ENCODE measurements at regions of chr2 and their contacts with region 1.

Region 1: DNA sequence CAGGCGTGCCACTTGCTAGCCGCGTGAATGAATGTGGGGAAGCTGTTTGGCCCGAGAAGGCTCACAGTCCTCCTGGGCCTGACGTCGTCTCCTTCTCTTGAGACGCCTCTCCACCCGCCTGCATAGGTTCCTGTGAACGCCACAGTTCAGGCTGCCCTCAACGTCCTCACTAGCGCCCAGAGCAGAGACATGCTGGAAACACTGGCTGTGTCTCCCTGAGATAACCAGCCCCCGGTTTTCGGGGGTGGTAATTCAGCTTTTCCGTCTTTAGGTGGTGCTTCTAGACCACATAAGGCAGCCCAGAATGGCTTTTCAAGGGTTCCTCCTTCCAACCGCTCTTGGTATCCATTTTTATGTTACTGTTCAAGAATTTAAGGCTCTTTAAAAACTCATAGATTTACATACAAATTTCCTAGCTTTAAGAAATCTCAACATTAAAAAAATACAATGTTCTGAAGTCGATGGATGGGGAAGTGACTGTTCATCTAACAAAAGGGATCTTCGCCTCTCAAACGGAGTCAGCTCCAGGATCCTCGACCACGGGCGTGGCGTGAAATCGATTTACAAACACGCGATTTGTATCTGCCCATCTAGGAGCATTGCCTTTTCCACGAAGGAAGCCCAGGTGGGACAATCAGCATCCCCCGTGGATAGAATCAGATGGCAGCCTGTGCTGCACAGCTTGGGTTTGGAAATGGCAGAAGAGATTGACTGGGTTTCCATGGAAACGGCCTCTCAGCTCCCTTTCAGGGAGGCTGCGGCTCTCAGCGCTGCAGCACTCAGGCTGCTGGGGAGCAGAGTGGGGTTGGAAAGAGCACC is 110.6 kb upstream of the PXDN start:
- DNase-seq: peak; percentile 95
- H3K4me3 ChIP-seq: peak overlapping the region; percentile 46 to 47
- H3K27ac ChIP-seq: peak overlapping the region in 1 of 2 experiments; percentile 55; a peak in 2 of 4 replicates
- H3K4me1 ChIP-seq: peaks cover 3 to 16% of the 10 kb centered on the region in 2 experiments; a peak in 3 of 4 replicates
- H3K27me3 ChIP-seq: peaks cover 30% of the 10 kb centered on the region
- CTCF ChIP-seq: peak; percentile 67
- EP300 ChIP-seq: no peak
- RAD21 ChIP-seq: peak; percentile 95

Region 2: GRCh38 chr2:1868683-1869141 is 13.8 kb after region 1 on chr2:
- CTCF ChIA-PET with region 1: interaction called, 52 read pairs
- POLR2A ChIA-PET with region 1: no interaction called
- DNase-seq: peak; percentile 85
- H3K4me3 ChIP-seq: no peak overlapping the region
- H3K27ac ChIP-seq: peak overlapping the region in 1 of 2 experiments; percentile 62; a peak in 2 of 4 replicates
- H3K4me1 ChIP-seq: peaks cover 0 to 58% of the 10 kb centered on the region in 2 experiments; a peak in 3 of 4 replicates
- H3K27me3 ChIP-seq: peaks cover 12% of the 10 kb centered on the region
- CTCF ChIP-seq: no peak
- EP300 ChIP-seq: peak in 1 of 2 experiments; percentile 33; a peak in 1 of 4 replicates
- RAD21 ChIP-seq: 0 out of 2 replicates have a peak, but pooled peaks have one; percentile 2

Region 3: DNA sequence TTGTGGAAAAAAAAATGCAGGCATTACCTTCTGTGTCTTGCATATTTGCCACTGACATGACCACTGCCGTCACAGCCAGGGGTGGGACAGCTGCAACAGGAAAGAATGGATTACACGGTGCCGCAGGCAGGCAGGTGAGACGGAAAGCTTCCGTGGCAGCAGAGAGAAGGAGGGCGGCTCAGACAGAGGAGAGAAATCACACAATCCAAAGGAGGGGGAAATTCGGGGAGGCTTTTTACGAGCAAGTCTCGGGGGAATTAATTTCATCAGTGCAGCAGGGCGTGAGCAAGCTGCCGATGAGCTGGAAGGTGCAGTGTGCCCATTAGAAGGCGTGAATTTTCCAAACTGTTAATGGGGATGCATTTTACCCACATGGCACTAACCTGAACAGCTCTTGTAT is 124.2 kb after region 1 on chr2:
- CTCF ChIA-PET with region 1: no interaction called
- POLR2A ChIA-PET with region 1: no interaction called
- DNase-seq: no peak
- H3K4me3 ChIP-seq: no peak overlapping the region
- H3K27ac ChIP-seq: peak overlapping the region in 1 of 2 experiments; percentile 43; a peak in 1 of 4 replicates
- H3K4me1 ChIP-seq: peaks cover 3 to 25% of the 10 kb centered on the region in 2 experiments; a peak in 3 of 4 replicates
- H3K27me3 ChIP-seq: no peaks in the 10 kb centered on the region
- CTCF ChIP-seq: no peak
- EP300 ChIP-seq: no peak
- RAD21 ChIP-seq: no peak

Region 4: DNA sequence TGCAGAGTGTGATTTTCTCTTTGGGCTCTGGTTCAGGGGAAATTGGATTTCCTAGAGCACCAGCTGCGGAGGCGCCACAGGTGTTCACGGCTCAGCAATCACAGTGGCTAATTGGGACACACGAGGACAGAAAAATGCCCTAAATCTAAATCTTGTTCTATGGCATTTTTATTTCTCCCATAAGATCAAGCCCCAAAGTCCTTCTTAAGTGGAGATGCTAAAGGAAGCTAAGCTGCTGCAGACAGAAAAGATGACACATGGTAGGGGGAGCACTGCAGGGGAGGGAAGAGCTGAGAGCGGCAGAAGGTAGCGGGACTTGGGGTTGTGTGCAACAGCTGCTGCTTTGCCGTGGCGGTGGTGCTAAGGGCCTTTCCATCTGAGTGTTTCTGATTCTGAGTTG is 195.5 kb after region 1 on chr2:
- CTCF ChIA-PET with region 1: no interaction called
- POLR2A ChIA-PET with region 1: no interaction called
- DNase-seq: no peak
- H3K4me3 ChIP-seq: no peak overlapping the region
- H3K27ac ChIP-seq: no peak overlapping the region
- H3K4me1 ChIP-seq: no peaks in the 10 kb centered on the region; a peak in 1 of 4 replicates
- H3K27me3 ChIP-seq: no peaks in the 10 kb centered on the region
- CTCF ChIP-seq: no peak
- EP300 ChIP-seq: no peak
- RAD21 ChIP-seq: no peak

Region 5: DNA sequence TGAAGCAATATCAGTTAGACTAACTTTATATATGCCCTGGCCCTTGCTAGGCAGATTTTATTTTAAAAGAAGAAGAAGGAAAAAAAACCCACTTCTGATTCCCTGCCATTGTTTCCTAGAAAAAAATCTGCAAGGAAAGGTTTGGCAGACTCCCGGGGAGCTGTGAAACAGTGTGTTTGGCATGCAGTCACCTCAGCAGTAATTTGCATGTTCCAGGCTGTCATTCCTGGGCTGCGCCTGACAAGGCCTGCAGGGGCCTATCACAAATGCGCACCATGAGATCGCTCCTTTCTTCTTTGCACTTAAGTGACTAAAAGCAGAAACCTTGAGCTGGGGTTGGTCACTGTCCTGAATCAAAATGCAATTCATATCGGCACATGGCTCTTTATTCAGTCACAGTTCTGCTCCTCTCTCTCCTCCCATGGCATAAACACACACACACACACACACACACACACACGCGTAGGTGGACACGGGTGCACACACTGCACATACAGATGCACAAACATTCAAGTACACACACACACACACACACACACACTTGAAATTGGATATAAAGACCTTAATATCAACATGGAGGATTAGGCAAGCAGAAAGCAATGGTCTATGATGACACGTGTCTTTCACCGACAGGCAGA is 303.4 kb after region 1 on chr2:
- CTCF ChIA-PET with region 1: no interaction called
- POLR2A ChIA-PET with region 1: no interaction called
- DNase-seq: no peak
- H3K4me3 ChIP-seq: no peak overlapping the region; a peak in 1 of 4 replicates
- H3K27ac ChIP-seq: no peak overlapping the region
- H3K4me1 ChIP-seq: peaks cover 0 to 7% of the 10 kb centered on the region in 2 experiments; a peak in 1 of 4 replicates
- H3K27me3 ChIP-seq: no peaks in the 10 kb centered on the region
- CTCF ChIP-seq: no peak
- EP300 ChIP-seq: no peak
- RAD21 ChIP-seq: no peak

Measured in SK-N-SH (cell line).